ENCODE measurements at regions of chr6 and their contacts with region 1.

Region 1: GRCh38 chr6:29847871-29848630 is 20.4 kb downstream of the HLA-G start:
- DNase-seq: peak; percentile 70 to 83 (median 76)
- ATAC-seq: peak; percentile 97
- H3K4me3 ChIP-seq: no peak overlapping the region
- H3K27ac ChIP-seq: no peak overlapping the region
- H3K4me1 ChIP-seq: peaks cover 0 to 6% of the 10 kb centered on the region in 2 experiments; a peak in 2 of 5 replicates
- H3K27me3 ChIP-seq: peaks cover 2 to 21% of the 10 kb centered on the region in 2 experiments; a peak in 3 of 5 replicates
- CTCF ChIP-seq: peak; percentile 92 to 96 (median 95)
- EP300 ChIP-seq: no peak
- POLR2A ChIP-seq: no peak
- RAD21 ChIP-seq: peak; percentile 98 to 99

Region 2: DNA sequence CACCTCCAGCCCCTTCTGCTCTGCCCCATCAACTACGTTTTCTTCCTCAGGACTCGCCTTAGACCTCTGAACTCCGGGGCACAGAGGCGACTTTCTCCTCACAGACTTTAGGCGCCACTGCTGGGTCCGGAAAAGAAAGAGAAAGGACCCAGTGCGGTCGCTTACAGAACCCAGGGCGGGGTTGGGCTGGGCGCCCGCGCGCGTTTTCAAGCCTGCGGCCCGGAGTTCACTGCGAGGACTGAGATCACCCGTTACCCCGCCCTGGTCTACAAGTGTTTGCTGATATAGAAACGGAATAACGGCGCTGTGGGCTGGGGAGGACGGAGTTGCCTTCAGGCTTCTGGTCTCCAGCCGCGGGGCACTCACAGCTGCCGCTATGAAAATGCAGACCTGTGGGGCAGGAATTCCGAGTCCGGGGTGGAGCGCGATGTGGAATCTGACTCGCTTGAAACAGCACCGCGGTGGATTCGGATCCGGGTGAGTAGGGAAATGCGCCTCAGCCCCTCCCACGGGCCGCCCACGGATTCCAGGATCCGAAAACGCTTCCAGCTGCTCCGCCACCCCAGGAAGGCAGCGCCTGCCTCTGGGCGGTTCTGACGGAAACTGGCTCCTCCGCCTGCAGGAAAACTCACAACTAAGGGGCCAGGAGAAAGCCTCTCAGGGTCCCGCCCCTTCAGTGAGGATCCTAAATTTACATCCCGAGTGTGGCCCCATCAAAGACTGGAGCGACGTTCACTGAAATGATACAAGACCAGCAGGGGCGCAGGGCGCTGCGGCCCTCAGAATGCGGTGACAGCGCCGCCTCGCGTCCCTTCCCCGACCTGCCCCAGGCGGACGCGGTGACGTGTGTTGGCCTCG is 95.4 kb before region 1 on chr6:
- CTCF ChIA-PET with region 1: no interaction called
- POLR2A ChIA-PET with region 1: no interaction called
- in situ Hi-C with region 1: loop called (anchors 25 kb)
- intact Hi-C with region 1: no loop called
- DNase-seq: peak; percentile 83 to 95 (median 88)
- ATAC-seq: peak; percentile 91
- H3K4me3 ChIP-seq: peak overlapping the region; percentile 51
- H3K27ac ChIP-seq: peak overlapping the region; percentile 68
- H3K4me1 ChIP-seq: peaks cover 14 to 30% of the 10 kb centered on the region in 2 experiments
- H3K27me3 ChIP-seq: peaks cover 0 to 4% of the 10 kb centered on the region in 2 experiments; a peak in 2 of 5 replicates
- CTCF ChIP-seq: peak; percentile 99 to 100 (median 100)
- EP300 ChIP-seq: no peak
- POLR2A ChIP-seq: peak; percentile 52; the same call in 1 of the 2 replicates
- RAD21 ChIP-seq: peak; percentile 75 to 90

Region 3: GRCh38 chr6:29864037-29864795 is 16.2 kb after region 1 on chr6:
- CTCF ChIA-PET with region 1: no interaction called
- POLR2A ChIA-PET with region 1: no interaction called
- in situ Hi-C with region 1: no loop called
- intact Hi-C with region 1: no loop called
- DNase-seq: no peak
- ATAC-seq: no peak; the same call in 2 of the 3 replicates
- H3K4me3 ChIP-seq: no peak overlapping the region
- H3K27ac ChIP-seq: no peak overlapping the region
- H3K4me1 ChIP-seq: no peaks in the 10 kb centered on the region
- H3K27me3 ChIP-seq: peaks cover 21 to 63% of the 10 kb centered on the region in 2 experiments
- CTCF ChIP-seq: no peak
- EP300 ChIP-seq: no peak
- POLR2A ChIP-seq: no peak
- RAD21 ChIP-seq: no peak

Region 4: DNA sequence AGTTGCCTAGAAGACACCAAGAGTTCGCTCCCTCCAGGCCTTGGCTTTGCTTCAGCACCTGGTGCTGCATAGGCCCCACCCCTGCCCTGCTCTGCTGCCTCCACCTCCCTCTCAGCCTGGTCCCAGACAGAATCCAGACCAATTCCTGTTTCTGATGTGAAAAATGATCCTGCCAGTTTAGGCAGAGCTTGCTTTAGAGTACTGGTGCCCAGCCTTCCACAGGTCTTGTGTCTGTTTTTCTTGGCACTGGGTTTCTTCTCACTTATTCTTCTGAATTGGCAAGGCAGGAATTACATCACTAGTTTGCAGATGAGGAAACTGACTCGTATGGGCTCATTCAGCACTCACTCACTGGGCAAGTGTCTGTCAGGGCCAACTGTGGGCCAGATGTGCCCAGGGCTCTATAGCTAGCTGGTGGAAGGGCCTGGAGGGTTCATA is 147.3 kb after region 1 on chr6:
- CTCF ChIA-PET with region 1: no interaction called
- POLR2A ChIA-PET with region 1: no interaction called
- in situ Hi-C with region 1: loop called (anchors 5 kb)
- intact Hi-C with region 1: no loop called
- DNase-seq: no peak
- ATAC-seq: no peak
- H3K4me3 ChIP-seq: no peak overlapping the region
- H3K27ac ChIP-seq: no peak overlapping the region
- H3K4me1 ChIP-seq: no peaks in the 10 kb centered on the region
- H3K27me3 ChIP-seq: peaks cover 6 to 14% of the 10 kb centered on the region in 2 experiments; a peak in 2 of 5 replicates
- CTCF ChIP-seq: no peak
- EP300 ChIP-seq: no peak
- POLR2A ChIP-seq: no peak
- RAD21 ChIP-seq: no peak

Region 5: DNA sequence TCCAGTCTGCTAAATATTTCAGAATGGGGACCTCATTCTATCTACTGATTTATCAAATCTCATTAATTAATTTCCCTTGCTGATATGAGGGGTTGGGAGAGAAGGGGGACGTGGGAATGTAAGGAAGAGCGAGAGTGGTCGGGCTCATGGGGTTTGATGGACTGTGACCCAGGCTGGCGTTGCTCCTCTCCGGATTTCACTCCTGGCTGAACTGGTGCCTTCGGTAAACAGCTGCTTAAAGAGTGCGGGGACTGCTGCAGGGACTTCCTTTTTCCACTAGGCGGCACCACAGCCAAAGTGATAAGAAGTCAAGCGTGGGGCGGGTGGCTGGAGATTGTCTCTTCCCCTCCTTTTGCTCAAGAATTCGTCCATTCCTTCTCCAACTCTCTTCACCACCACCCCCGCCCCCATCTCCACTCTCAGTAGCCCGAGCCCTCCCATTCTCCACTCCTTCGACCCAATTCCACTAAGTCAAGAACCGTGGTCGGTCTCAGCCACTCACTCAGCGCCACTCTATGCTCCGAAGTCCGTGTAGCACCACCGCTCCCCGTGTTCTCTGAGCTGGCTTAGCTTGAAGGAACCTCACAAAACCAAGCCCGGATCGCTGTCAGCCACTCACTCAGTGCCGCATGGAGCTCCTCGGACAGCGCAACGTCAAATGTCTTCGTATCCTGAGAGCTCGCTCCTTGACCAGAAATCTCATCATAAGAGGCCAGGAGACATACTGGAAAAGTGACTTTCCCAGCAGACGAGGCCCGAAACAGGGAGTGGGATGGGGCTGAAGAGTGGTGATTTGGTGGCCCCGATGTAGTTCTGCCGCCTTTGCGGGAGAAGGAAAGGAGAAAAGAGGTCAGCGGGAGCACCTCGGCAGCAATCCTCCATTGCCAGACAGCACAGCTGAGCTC is 255.2 kb after region 1 on chr6:
- CTCF ChIA-PET with region 1: interaction called, 3 read pairs
- POLR2A ChIA-PET with region 1: no interaction called
- in situ Hi-C with region 1: no loop called
- intact Hi-C with region 1: loop called (anchors 10 kb)
- DNase-seq: peak; percentile 88 to 93 (median 88)
- ATAC-seq: peak; percentile 87
- H3K4me3 ChIP-seq: no peak overlapping the region
- H3K27ac ChIP-seq: no peak overlapping the region
- H3K4me1 ChIP-seq: peaks cover 25 to 34% of the 10 kb centered on the region in 2 experiments
- H3K27me3 ChIP-seq: peaks cover 17 to 29% of the 10 kb centered on the region in 2 experiments; a peak in 4 of 5 replicates
- CTCF ChIP-seq: peak; percentile 96 to 98 (median 98)
- EP300 ChIP-seq: no peak
- POLR2A ChIP-seq: peak; percentile 35; the same call in 1 of the 2 replicates
- RAD21 ChIP-seq: peak; percentile 89 to 92

Region 6: GRCh38 chr6:30169658-30170614 is 321.9 kb after region 1 on chr6:
- CTCF ChIA-PET with region 1: no interaction called
- POLR2A ChIA-PET with region 1: no interaction called
- in situ Hi-C with region 1: loop called (anchors 5 kb)
- intact Hi-C with region 1: loop called (anchors 2 kb)
- DNase-seq: peak; percentile 59 to 73 (median 65)
- ATAC-seq: peak; percentile 97
- H3K4me3 ChIP-seq: no peak overlapping the region
- H3K27ac ChIP-seq: no peak overlapping the region
- H3K4me1 ChIP-seq: peaks cover 0 to 8% of the 10 kb centered on the region in 2 experiments; a peak in 1 of 5 replicates
- H3K27me3 ChIP-seq: peaks cover 10 to 27% of the 10 kb centered on the region in 2 experiments
- CTCF ChIP-seq: peak; percentile 73 to 94 (median 82)
- EP300 ChIP-seq: no peak
- POLR2A ChIP-seq: no peak
- RAD21 ChIP-seq: peak; percentile 82 to 92

Measured in K562 (cell line).